GM18951 (cell line): ENCODE measurements at regions of chr12 and their contacts with region 1.

Region 1: GRCh38 chr12:107884769-107885694 is 110.5 kb downstream of the ASCL4 start:
- POLR2A ChIP-seq: no peak

Region 2: DNA sequence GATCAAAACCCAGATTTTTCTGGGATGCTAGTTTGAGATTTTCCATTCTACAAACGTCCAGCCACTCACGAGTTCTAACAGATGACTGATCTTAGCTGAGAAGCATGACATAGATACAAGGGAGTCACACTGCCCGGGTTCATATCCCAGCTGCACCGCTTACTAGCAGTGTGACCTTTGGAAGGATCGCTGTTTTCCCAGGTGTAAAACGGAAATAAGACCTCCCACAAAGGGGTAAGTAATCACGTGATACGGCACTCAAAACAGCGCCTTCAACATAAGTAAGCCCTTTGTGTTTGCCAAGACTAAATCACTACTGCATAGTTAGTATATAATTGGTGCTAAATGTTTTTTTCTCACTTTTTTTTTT is 200.1 kb before region 1 on chr12:
- in situ Hi-C with region 1: loop called (anchors 5 kb)
- POLR2A ChIP-seq: no peak

Region 3: GRCh38 chr12:107759410-107759809 is 125.6 kb before region 1 on chr12:
- in situ Hi-C with region 1: loop called (anchors 10 kb)
- POLR2A ChIP-seq: no peak